Gastrocnemius medialis (tissue), 4 donors: ENCODE measurements at regions of chr17 and their contacts with region 1.

Region 1: DNA sequence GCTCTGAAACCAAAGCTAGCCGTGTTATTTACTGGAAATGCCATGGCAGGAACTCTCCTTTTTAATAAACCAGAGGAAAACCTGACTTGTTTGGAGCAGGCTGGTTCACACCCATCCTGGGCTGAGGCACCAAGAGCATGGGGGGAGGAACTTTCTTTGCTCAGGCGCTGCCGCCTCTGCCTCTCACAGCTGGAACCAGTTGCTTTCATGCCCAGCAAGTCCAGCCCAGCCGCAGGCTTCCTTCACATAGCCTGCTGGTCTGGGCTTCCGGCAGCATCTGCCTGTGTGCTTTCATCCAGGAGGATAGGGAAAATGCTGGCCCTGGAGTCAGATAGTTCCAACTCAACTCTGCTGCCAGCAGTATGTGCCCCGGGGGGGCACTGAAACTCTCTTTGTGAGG is 88.1 kb upstream of the ASIC2 start:
- DNase-seq: no peak
- ATAC-seq: no peak
- H3K4me3 ChIP-seq: no peak overlapping the region
- H3K27ac ChIP-seq: no peak overlapping the region
- H3K4me1 ChIP-seq: no peaks in the 10 kb centered on the region
- H3K27me3 ChIP-seq: no peaks in the 10 kb centered on the region
- CTCF ChIP-seq: no peak
- POLR2A ChIP-seq: no peak

Region 2: GRCh38 chr17:33292184-33292980 is 88.8 kb before region 1 on chr17:
- in situ Hi-C with region 1: loop called in 2 of 4 experiments (anchors 25 kb)
- intact Hi-C with region 1: no loop called
- DNase-seq: no peak
- ATAC-seq: no peak
- H3K4me3 ChIP-seq: peak overlapping the region in 1 of 4 donors; percentile 25
- H3K27ac ChIP-seq: no peak overlapping the region
- H3K4me1 ChIP-seq: peaks cover 0 to 7% of the 10 kb centered on the region in 2 donors
- H3K27me3 ChIP-seq: peaks cover 29 to 47% (median 41%) of the 10 kb centered on the region in 3 donors
- CTCF ChIP-seq: peak in 1 of 5 experiments; percentile 5
- POLR2A ChIP-seq: no peak